GM12878 (cell line): ENCODE measurements at regions of chr10 and their contacts with region 1.

Region 1: DNA sequence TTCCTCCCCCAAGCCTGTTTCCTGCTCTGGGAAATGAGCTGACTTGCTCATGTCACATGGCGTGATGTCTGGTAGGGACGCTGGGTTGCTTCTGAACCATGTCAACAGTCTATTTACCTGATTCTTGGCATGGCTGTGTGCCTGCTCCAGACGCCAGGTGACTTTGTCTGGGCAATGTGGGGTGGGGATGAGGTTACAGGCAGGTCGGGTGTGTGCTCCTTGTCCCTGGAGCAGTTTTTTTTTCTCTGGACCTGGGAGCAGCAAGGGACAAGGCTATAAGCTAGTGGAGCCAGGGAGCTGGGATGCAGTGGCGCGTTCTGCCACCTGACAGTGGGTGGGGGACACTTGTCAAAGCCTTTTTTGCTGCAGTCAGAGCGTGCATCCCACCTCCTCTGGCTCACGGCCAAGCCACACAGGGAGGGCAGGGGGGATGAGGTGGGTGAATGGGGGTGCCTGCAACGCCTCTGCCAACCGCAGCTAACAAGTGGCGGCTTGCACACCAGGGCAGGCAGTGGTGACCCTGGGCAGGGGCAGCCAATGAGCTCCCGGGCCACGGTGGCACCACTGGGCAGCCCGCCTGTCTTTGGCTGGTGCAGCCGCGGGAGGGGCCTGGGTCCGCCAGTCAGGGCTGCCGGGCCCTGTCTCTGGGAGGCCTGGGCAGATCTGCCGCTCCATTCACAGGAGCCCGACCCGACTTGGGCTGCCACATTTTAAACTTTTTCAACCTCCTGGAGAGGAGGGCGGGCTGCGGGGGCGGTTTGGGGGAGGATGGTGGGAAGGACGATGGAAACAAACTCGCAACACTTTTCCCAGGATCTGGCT is 22.9 kb downstream of the DNAJB12 start:
- DNase-seq: peak; percentile 96
- ATAC-seq: peak; percentile 80
- H3K4me3 ChIP-seq: 0 out of 2 replicates have a peak overlapping the region, but pooled peaks have one; percentile 4
- H3K27ac ChIP-seq: peak overlapping the region; percentile 95
- H3K4me1 ChIP-seq: peaks cover 76% of the 10 kb centered on the region
- H3K27me3 ChIP-seq: no peaks in the 10 kb centered on the region
- CTCF ChIP-seq: peak; percentile 1 to 50 (median 13); a peak in 1 of 6 replicates
- EP300 ChIP-seq: peak; percentile 31 to 85; a peak in 3 of 4 replicates
- POLR2A ChIP-seq: peak; percentile 68
- RAD21 ChIP-seq: no peak

Region 2: DNA sequence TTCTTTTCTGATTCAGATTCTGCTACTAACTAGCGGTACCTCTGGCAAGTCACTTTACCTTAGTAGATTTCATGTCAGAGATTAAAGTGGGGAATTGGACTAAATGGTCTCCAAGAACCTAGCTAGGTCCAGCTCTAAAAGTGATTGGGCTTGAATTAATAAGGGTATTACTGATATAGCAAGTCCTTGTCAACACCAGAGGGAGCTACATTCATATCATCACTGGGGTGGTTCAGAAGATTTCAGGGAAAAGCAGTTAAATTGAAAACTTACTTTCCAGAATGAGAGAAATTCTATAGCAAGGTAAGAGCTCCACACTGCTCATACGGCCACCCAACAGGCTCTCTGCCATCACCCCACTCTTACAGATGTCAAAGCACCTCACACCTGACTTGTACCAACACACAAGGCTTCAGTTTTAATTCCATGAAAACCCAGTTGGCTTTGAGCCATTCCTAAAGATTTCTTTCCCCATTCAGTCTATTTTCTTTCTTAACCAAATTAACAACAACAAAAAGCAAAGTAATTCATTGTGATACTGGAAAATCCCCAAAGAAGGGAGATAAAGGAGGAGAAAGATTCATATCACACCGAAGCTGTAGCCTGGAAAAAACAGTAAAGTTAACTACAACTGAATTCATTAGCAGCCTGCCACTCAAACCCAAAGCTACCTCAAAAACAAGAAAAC is 205.5 kb before region 1 on chr10:
- CTCF ChIA-PET with region 1: interaction called, 127 read pairs
- POLR2A ChIA-PET with region 1: interaction called, 5 read pairs
- RAD21 ChIA-PET with region 1: interaction called, 76 read pairs
- SMC1A ChIA-PET with region 1: interaction called, 168 read pairs
- in situ Hi-C with region 1: loop called (anchors 5 kb)
- intact Hi-C with region 1: no loop called
- DNase-seq: no peak
- ATAC-seq: peak; percentile 42
- H3K4me3 ChIP-seq: no peak overlapping the region
- H3K27ac ChIP-seq: no peak overlapping the region
- H3K4me1 ChIP-seq: no peaks in the 10 kb centered on the region
- H3K27me3 ChIP-seq: no peaks in the 10 kb centered on the region
- CTCF ChIP-seq: peak; percentile 13 to 46 (median 28); a peak in 4 of 6 replicates
- EP300 ChIP-seq: no peak
- POLR2A ChIP-seq: no peak
- RAD21 ChIP-seq: peak; percentile 57

Region 3: GRCh38 chr10:72248468-72249151 is 83.2 kb before region 1 on chr10:
- CTCF ChIA-PET with region 1: interaction called, 17 read pairs
- POLR2A ChIA-PET with region 1: interaction called, 44 read pairs
- RAD21 ChIA-PET with region 1: interaction called, 170 read pairs
- SMC1A ChIA-PET with region 1: interaction called, 41 read pairs
- in situ Hi-C with region 1: no loop called
- intact Hi-C with region 1: loop called (anchors 1 kb)
- DNase-seq: peak; percentile 99
- ATAC-seq: peak; percentile 95
- H3K4me3 ChIP-seq: peak overlapping the region; percentile 55; the same call in 1 of the 2 replicates
- H3K27ac ChIP-seq: peak overlapping the region; percentile 97
- H3K4me1 ChIP-seq: peaks cover 72% of the 10 kb centered on the region
- H3K27me3 ChIP-seq: no peaks in the 10 kb centered on the region
- CTCF ChIP-seq: no peak
- EP300 ChIP-seq: peak; percentile 88 to 91
- POLR2A ChIP-seq: peak; percentile 89
- RAD21 ChIP-seq: no peak

Region 4: GRCh38 chr10:72260588-72261322 is 71.1 kb before region 1 on chr10:
- CTCF ChIA-PET with region 1: interaction called, 57 read pairs
- POLR2A ChIA-PET with region 1: interaction called, 48 read pairs
- RAD21 ChIA-PET with region 1: interaction called, 170 read pairs
- SMC1A ChIA-PET with region 1: interaction called, 56 read pairs
- in situ Hi-C with region 1: no loop called
- intact Hi-C with region 1: loop called (anchors 1 kb)
- DNase-seq: peak; percentile 88
- ATAC-seq: peak; percentile 80
- H3K4me3 ChIP-seq: peak overlapping the region; percentile 68
- H3K27ac ChIP-seq: peak overlapping the region; percentile 95
- H3K4me1 ChIP-seq: peaks cover 68% of the 10 kb centered on the region
- H3K27me3 ChIP-seq: no peaks in the 10 kb centered on the region
- CTCF ChIP-seq: peak in 2 of 3 experiments; percentile 15 to 39; a peak in 2 of 6 replicates
- EP300 ChIP-seq: no peak; a peak in 2 of 4 replicates
- POLR2A ChIP-seq: peak; percentile 77
- RAD21 ChIP-seq: peak; percentile 9; the same call in 1 of the 2 replicates

Region 5: DNA sequence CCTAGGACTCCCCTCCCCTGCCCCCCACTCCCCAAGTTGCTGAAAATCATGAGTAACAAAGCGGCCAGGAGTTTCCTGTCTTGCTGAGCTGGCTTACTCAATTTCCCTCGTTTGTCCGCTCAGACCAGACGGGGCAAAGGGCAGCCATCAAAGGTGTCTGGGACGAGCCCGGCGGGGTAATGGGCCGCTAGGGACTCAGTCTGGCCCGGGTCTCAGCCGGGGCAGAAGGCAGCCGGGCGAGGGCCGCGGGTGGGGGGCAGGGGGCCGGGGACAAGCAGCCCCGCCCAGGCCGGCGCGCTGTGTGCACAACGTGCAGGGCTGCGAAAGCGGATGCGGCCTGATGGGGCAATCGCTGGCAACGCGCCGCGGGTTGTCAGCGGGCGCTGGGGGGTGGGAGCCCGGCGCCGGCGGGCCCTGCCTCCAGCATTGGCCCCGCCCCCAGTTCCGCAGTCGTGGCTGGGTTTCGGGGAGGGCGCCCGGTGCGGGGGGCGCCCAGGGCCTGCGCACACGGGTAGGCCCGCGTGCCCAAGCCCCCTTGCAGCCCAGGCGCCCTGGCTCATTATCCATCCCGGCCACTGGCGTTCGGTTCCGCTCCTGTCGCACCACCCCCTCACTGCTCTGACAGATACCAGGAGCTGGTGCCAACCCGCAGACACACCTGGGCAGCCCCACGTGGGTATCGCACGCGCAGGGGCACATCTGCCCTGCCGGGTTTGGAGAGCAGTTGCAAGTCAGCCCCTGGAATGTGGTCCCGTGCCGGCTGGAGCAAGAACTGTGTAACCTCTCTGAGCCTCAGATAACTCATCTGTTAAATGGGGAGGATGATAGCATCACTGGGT is 12.2 kb before region 1 on chr10:
- CTCF ChIA-PET with region 1: interaction called, 59 read pairs
- POLR2A ChIA-PET with region 1: interaction called, 120 read pairs
- RAD21 ChIA-PET with region 1: interaction called, 137 read pairs
- SMC1A ChIA-PET with region 1: interaction called, 103 read pairs
- in situ Hi-C with region 1: no loop called
- intact Hi-C with region 1: loop called (anchors 1 kb)
- DNase-seq: no peak
- ATAC-seq: peak; percentile 81
- H3K4me3 ChIP-seq: peak overlapping the region; percentile 76
- H3K27ac ChIP-seq: peak overlapping the region; percentile 89
- H3K4me1 ChIP-seq: peaks cover 59% of the 10 kb centered on the region
- H3K27me3 ChIP-seq: no peaks in the 10 kb centered on the region
- CTCF ChIP-seq: no peak
- EP300 ChIP-seq: 0 out of 4 replicates have a peak, but pooled peaks of 1 of the 2 experiments have one; percentile 59
- POLR2A ChIP-seq: peak; percentile 84
- RAD21 ChIP-seq: no peak